ENCODE measurements at regions of chr10 and their contacts with region 1.

Region 1: GRCh38 chr10:60646966-60647796 is 131.1 kb upstream of the CDK1 start:
- DNase-seq: peak in 1 of 3 donors; percentile 78
- ATAC-seq: peak; percentile 66
- H3K4me3 ChIP-seq: no peak overlapping the region
- H3K4me1 ChIP-seq: no peaks in the 10 kb centered on the region
- CTCF ChIP-seq: no peak

Region 2: GRCh38 chr10:60444494-60445064 is 202.6 kb before region 1 on chr10:
- intact Hi-C with region 1: loop called (anchors 5 kb)
- DNase-seq: no peak
- ATAC-seq: no peak
- H3K4me3 ChIP-seq: no peak overlapping the region
- H3K4me1 ChIP-seq: no peaks in the 10 kb centered on the region
- CTCF ChIP-seq: no peak

Region 3: DNA sequence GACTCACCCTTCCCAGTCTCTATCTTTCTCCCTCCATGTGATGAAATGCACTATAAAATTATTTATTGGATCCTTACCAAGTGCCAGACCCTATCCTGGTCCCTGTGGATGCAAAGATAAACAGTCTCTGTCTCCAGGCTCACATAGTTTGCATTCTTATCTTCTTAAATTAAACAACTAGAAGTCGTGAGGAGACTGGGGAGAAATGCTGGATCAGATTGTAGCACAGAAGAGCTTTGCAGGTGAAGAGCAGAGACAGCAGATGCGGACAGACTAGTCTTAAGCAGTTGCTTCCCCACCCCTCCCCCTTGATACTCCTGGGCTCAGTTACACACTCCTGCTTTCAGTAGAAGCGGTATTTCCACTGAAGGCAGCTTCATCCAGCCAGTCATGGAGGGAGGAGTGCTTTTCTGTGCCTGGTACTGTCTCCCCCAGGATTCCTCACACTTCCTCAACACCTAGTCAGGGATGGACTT is 110.3 kb after region 1 on chr10:
- intact Hi-C with region 1: no loop called
- DNase-seq: no peak
- ATAC-seq: no peak
- H3K4me3 ChIP-seq: no peak overlapping the region
- H3K4me1 ChIP-seq: no peaks in the 10 kb centered on the region
- CTCF ChIP-seq: no peak

Region 4: DNA sequence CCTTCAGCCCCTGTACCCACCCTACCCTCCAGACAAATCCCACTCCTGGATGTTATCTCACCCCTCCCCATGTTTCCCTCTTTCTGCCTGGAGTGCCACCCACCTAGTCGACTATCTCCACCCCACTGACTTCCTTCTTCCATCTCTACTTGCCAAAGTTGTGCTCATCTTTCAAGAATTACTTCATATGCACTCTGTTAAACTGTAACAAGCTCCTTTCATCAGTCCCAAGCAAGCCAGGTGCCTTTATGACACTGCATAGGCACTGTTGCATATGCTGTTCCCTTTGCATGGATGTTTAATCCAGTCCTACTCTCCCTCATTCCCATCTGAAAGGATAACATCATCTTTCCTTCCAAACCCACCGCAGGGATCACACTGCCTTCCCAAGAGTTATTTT is 122.2 kb after region 1 on chr10:
- intact Hi-C with region 1: loop called in 1 of 2 experiments (anchors 5 kb)
- DNase-seq: no peak
- ATAC-seq: peak; percentile 29
- H3K4me3 ChIP-seq: no peak overlapping the region
- H3K4me1 ChIP-seq: no peaks in the 10 kb centered on the region
- CTCF ChIP-seq: no peak

Region 5: DNA sequence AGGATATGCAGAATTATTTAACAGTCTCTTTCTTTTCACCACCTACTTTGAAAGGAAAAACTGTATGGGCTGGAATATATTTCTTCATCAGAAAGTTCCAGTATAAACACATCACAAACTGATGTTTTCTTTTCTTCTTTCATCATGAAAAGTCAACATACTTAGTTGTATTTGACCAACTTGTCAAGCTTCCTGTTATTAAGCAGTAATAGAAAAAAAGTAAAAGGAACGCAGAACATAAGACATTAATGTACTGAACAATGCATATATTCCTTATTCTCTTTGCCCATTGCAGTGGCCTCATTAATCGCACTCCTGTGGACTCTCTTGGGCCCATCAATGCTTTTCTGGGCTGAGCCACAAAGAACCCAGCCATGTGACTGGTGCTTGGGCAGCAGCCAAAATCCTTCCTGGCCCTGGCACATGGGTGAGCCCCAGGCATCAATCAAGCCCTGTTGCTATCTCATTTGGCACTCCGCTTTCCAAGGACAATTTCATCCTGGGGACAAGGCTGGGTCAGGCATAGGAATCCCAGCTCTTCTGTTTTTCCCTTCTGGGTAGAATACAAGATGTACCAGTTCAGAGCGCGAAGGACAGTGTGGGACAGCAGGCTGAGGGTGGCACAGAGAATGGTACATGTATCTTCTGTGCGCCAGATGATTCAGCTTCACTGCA is 254.5 kb after region 1 on chr10:
- intact Hi-C with region 1: no loop called
- DNase-seq: no peak
- ATAC-seq: no peak
- H3K4me3 ChIP-seq: no peak overlapping the region
- H3K4me1 ChIP-seq: no peaks in the 10 kb centered on the region
- CTCF ChIP-seq: no peak